ENCODE measurements at regions of chr5 and their contacts with region 1.

Region 1: DNA sequence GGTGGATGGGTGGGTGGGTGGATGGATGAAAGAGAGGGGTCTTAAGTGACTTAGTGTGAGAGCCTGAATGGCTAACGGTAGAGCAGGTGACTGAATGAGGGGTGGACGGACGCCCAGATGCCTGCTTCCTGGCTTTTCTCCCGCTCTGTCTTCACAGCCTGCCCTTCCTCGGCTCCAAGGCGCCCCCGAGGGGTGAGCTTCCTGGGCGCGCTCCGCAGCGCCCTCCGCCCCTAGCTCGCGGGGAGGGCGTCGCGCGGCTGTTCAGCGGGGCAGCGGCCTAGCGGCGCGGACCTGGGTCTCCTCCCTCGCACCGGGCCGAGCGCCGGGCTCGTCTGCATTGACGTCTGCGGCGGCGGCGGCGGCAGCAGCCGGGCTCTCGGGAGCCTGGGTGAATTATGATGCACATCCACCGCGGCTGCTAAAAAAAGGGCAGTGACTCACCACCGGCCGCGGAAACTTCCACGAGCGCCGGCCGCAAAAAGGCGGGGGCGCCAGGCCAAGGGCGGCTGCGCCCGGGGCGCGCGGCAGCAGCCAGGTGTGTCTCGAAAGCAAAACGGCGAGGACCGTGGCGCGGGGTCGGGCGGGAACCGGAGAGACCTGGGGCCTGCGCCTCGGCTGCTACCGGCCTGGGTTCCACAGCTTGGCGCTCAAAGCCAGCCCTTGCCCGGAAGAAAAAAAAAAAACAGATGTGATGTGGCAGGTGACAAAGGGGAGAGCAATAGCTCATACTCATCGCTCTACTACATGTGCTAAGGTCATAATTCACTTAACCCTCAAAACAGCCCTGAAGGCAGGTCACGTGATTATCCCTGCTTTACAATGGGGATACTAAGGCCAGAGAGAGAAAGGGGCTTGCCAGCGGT is 143.0 kb upstream of the ADRA1B start:
- DNase-seq: peak; percentile 70 to 81
- ATAC-seq: peak; percentile 97 to 98
- H3K4me3 ChIP-seq: peak overlapping the region; percentile 36 to 58 (median 48)
- H3K27ac ChIP-seq: peak overlapping the region; percentile 72 to 87 (median 84)
- H3K4me1 ChIP-seq: peaks cover 5 to 6% of the 10 kb centered on the region in 2 donors
- H3K27me3 ChIP-seq: no peaks in the 10 kb centered on the region
- CTCF ChIP-seq: no peak
- POLR2A ChIP-seq: peak; percentile 54 to 63

Region 2: GRCh38 chr5:159515909-159516415 is 257.3 kb before region 1 on chr5:
- in situ Hi-C with region 1: no loop called
- intact Hi-C with region 1: loop called (anchors 5 kb)
- DNase-seq: peak in 1 of 2 donors; percentile 61
- ATAC-seq: peak; percentile 52 to 83
- H3K4me3 ChIP-seq: no peak overlapping the region
- H3K27ac ChIP-seq: no peak overlapping the region
- H3K4me1 ChIP-seq: peaks cover 0 to 1% of the 10 kb centered on the region in 2 donors
- H3K27me3 ChIP-seq: no peaks in the 10 kb centered on the region
- CTCF ChIP-seq: peak; percentile 51 to 76 (median 69)
- POLR2A ChIP-seq: no peak

Region 3: GRCh38 chr5:159826351-159827214 is 53.3 kb after region 1 on chr5:
- in situ Hi-C with region 1: no loop called
- intact Hi-C with region 1: loop called (anchors 1 kb)
- DNase-seq: peak; percentile 90 to 96
- ATAC-seq: peak; percentile 94 to 97
- H3K4me3 ChIP-seq: no peak overlapping the region
- H3K27ac ChIP-seq: peak overlapping the region; percentile 77 to 90 (median 84)
- H3K4me1 ChIP-seq: peaks cover 28 to 45% of the 10 kb centered on the region in 2 donors
- H3K27me3 ChIP-seq: no peaks in the 10 kb centered on the region
- CTCF ChIP-seq: no peak
- POLR2A ChIP-seq: no peak

Region 4: GRCh38 chr5:159878988-159879471 is 105.7 kb after region 1 on chr5:
- in situ Hi-C with region 1: no loop called
- intact Hi-C with region 1: loop called (anchors 10 kb)
- DNase-seq: peak; percentile 33 to 70
- ATAC-seq: peak; percentile 73 to 85
- H3K4me3 ChIP-seq: no peak overlapping the region
- H3K27ac ChIP-seq: peak overlapping the region; percentile 39 to 67 (median 44)
- H3K4me1 ChIP-seq: peaks cover 10 to 17% of the 10 kb centered on the region in 2 donors
- H3K27me3 ChIP-seq: no peaks in the 10 kb centered on the region
- CTCF ChIP-seq: no peak
- POLR2A ChIP-seq: no peak

Measured in gastrocnemius medialis (tissue), 4 donors.